ENCODE measurements at regions of chr9 and their contacts with region 1.

Region 1: GRCh38 chr9:127437497-127438264 is 13.5 kb downstream of the ZNF79 start:
- DNase-seq: no peak

Region 2: DNA sequence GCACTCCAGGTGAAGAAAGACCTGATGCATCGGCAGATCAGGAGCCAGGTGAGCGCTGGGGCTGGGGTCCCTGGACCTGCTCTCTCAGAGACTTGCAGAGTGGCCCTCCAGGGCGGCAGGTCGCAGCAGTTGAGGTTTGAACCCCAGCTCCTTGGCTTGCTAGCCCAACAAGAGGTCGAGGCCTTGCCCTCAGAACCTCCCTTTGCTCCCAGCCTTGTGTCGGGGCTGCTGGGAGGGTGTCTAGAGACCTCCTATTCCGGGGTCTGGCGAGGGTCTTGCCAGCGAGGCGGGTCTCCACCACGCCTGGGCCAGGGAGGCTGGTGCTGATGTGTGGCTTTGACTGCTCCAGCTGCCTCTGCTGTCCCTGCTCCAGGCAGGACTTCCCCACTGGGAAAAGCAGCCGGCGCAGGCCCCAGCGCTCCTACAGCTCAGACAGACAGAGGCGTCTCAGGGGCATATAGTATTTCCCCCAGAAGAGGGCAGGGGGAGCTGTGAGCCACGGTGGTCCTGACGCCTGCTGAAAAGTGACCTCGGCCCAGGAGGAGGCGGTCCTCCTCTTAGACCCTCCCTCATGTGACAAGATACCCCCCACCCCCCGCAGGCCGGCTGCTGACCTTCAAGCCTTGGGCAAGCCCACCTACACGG is 51.9 kb after region 1 on chr9:
- intact Hi-C with region 1: loop called (anchors 10 kb)
- DNase-seq: no peak

Region 3: DNA sequence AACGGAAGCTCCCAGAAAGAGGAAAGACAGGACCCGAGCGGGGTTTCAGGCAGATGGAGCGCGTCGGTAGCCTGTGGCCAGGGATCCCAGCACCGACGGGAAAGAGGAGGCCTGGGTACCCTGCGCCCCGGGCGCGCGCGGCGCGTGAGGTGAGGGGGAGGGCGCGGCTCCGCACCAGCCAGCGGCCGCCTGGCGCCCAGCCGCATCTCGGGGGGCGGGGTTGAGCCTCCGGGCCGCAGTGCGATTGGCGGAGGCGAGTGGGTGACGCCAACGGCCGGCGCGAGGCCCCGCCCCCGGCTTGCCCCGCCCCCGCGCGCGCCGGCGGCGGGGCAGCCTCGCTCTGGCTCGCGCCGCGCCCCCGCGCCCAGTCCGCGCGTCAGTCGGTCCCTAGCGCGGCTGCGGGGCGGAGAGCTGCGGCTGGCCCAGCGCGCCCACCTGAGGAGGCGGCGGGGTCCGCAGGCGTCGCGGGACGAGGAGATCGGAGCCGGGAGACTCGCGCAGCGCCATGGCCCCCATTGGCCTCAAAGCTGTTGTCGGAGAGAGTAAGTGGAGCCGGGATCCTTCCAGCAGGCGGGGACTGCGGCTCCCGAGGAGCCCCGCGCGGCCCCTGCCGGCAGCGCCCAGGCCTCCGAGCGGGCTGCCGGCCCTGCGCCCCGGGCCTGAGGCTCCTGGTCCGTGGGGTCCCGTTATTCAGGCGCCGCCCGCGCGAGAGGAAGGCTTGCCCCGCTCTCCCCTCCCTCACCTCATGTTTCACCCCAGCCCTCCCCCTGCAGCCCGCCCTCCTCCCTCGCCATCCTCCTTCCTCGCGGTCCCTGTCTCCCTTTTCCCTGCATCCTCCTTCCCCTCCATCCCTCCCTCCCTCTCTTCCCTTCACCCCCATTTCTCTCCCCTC is 174.5 kb after region 1 on chr9 and contains the start of gene STXBP1:
- intact Hi-C with region 1: no loop called
- DNase-seq: peak; percentile 69 to 96 (median 92)

Measured in head of caudate nucleus (tissue), 42 donors.